GM12878 (cell line): ENCODE measurements at regions of chr22 and their contacts with region 1.

Region 1: GRCh38 chr22:40898850-40899357 is 37.0 kb upstream of the DNAJB7 start:
- DNase-seq: peak; percentile 44
- ATAC-seq: peak; percentile 92
- H3K4me3 ChIP-seq: no peak overlapping the region
- H3K27ac ChIP-seq: no peak overlapping the region
- H3K4me1 ChIP-seq: no peaks in the 10 kb centered on the region
- H3K27me3 ChIP-seq: no peaks in the 10 kb centered on the region
- CTCF ChIP-seq: peak; percentile 48 to 68 (median 54); a peak in 5 of 6 replicates
- EP300 ChIP-seq: no peak
- POLR2A ChIP-seq: no peak
- RAD21 ChIP-seq: peak; percentile 77

Region 2: GRCh38 chr22:40679964-40680818 is 218.7 kb before region 1 on chr22:
- CTCF ChIA-PET with region 1: interaction called, 49 read pairs
- POLR2A ChIA-PET with region 1: interaction called, 6 read pairs
- RAD21 ChIA-PET with region 1: interaction called, 45 read pairs
- SMC1A ChIA-PET with region 1: interaction called, 33 read pairs
- in situ Hi-C with region 1: loop called (anchors 10 kb)
- intact Hi-C with region 1: loop called (anchors 2 kb)
- DNase-seq: no peak
- ATAC-seq: no peak
- H3K4me3 ChIP-seq: no peak overlapping the region
- H3K27ac ChIP-seq: no peak overlapping the region
- H3K4me1 ChIP-seq: no peaks in the 10 kb centered on the region
- H3K27me3 ChIP-seq: peaks cover 0 to 3% of the 10 kb centered on the region in 2 experiments; a peak in 3 of 4 replicates
- CTCF ChIP-seq: no peak
- EP300 ChIP-seq: no peak
- POLR2A ChIP-seq: no peak
- RAD21 ChIP-seq: no peak

Region 3: DNA sequence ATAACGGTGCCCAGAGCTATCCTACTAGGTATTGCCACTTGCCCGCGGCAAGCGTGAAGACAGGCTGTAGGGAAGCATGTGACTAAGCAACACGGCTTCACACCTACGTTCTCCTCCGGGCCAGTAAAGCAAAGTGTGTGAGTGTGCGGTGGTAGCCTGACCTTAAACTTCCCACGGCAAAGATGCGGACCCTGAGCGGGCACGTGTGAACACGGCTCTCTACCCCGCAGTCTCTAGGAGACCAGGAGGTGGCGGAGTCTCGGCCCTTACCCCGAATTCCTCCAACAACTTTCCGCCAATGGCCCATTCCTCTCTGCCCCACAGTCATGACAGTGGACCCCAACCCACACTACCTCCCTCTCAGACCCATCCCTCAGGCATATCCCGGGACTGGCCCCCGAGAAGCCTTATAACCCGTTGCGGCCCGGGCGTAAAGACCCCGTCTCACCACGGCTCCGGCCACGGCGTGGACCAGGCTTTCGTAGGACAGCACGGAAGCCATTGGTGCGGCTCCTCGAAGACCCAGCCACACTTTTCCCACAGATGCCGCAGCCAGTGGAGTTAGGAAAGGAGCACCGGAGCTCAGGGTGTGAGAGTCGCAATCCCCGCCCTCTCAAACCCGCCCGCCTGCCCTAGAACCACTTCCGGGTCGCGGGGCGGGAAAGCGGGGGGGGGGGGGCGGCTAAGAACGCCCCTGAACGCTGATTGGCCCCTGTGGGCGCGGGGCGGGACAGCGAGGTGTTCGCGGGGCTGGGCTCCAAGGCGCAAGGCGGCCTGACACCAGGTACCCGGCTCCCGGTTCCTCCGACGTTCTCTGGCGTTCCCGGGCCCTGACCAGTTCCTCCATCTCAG is 79.9 kb before region 1 on chr22 and contains the start of gene SLC25A17:
- CTCF ChIA-PET with region 1: interaction called, 7 read pairs
- POLR2A ChIA-PET with region 1: interaction called, 4 read pairs
- RAD21 ChIA-PET with region 1: interaction called, 14 read pairs
- SMC1A ChIA-PET with region 1: interaction called, 11 read pairs
- in situ Hi-C with region 1: no loop called
- intact Hi-C with region 1: no loop called
- DNase-seq: peak; percentile 39
- ATAC-seq: peak; percentile 93
- H3K4me3 ChIP-seq: peak within 1 kb of the TSS; percentile 89
- H3K27ac ChIP-seq: peak within 1 kb of the TSS; percentile 84
- H3K4me1 ChIP-seq: no peaks in the 10 kb centered on the region
- H3K27me3 ChIP-seq: no peaks in the 10 kb centered on the region
- CTCF ChIP-seq: peak; percentile 30 to 41 (median 34); a peak in 3 of 6 replicates
- EP300 ChIP-seq: no peak
- POLR2A ChIP-seq: peak; percentile 70
- RAD21 ChIP-seq: no peak
- polyA plus RNA-seq, gene SLC25A17: 77.7 to 113 TPM

Region 4: GRCh38 chr22:40867109-40867508 is 31.8 kb before region 1 on chr22:
- CTCF ChIA-PET with region 1: interaction called, 13 read pairs
- POLR2A ChIA-PET with region 1: no interaction called
- RAD21 ChIA-PET with region 1: no interaction called
- SMC1A ChIA-PET with region 1: interaction called, 5 read pairs
- in situ Hi-C with region 1: no loop called
- intact Hi-C with region 1: no loop called
- DNase-seq: no peak
- ATAC-seq: no peak
- H3K4me3 ChIP-seq: no peak overlapping the region
- H3K27ac ChIP-seq: no peak overlapping the region
- H3K4me1 ChIP-seq: peaks cover 6% of the 10 kb centered on the region; the same call in 1 of the 2 replicates
- H3K27me3 ChIP-seq: no peaks in the 10 kb centered on the region
- CTCF ChIP-seq: no peak
- EP300 ChIP-seq: no peak
- POLR2A ChIP-seq: no peak
- RAD21 ChIP-seq: no peak

Region 5: DNA sequence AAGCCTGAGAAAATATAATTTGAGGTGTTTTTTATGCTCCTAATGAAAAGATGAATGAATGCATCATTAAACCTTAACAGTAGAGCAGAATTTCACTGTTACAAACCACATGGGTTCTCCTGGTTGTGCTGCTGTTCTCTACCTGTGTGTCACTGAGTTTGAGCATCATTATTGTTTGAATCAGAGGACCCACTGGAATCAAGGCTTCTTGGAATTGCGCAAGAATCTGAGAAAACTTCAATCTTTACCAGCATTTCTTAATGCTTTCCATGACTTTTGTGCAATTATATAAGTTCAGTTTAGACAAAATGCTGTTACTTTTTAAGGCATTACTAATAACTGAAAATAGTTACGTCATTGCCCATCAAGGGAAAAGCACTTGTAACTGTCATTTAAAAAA is 33.5 kb after region 1 on chr22:
- CTCF ChIA-PET with region 1: no interaction called
- POLR2A ChIA-PET with region 1: no interaction called
- RAD21 ChIA-PET with region 1: no interaction called
- SMC1A ChIA-PET with region 1: no interaction called
- in situ Hi-C with region 1: no loop called
- intact Hi-C with region 1: no loop called
- DNase-seq: no peak
- ATAC-seq: no peak
- H3K4me3 ChIP-seq: no peak overlapping the region
- H3K27ac ChIP-seq: no peak overlapping the region
- H3K4me1 ChIP-seq: no peaks in the 10 kb centered on the region
- H3K27me3 ChIP-seq: no peaks in the 10 kb centered on the region
- CTCF ChIP-seq: no peak
- EP300 ChIP-seq: no peak
- POLR2A ChIP-seq: no peak
- RAD21 ChIP-seq: no peak

Region 6: GRCh38 chr22:41022470-41023298 is 123.8 kb after region 1 on chr22:
- CTCF ChIA-PET with region 1: no interaction called
- POLR2A ChIA-PET with region 1: no interaction called
- RAD21 ChIA-PET with region 1: no interaction called
- SMC1A ChIA-PET with region 1: no interaction called
- in situ Hi-C with region 1: no loop called
- intact Hi-C with region 1: no loop called
- DNase-seq: peak; percentile 24
- ATAC-seq: peak; percentile 86
- H3K4me3 ChIP-seq: peak overlapping the region; percentile 75
- H3K27ac ChIP-seq: 0 out of 2 replicates have a peak overlapping the region, but pooled peaks have one; percentile 29
- H3K4me1 ChIP-seq: peaks cover 7% of the 10 kb centered on the region
- H3K27me3 ChIP-seq: no peaks in the 10 kb centered on the region; a peak in 1 of 4 replicates
- CTCF ChIP-seq: no peak
- EP300 ChIP-seq: 0 out of 4 replicates have a peak, but pooled peaks of 1 of the 2 experiments have one; percentile 16
- POLR2A ChIP-seq: peak; percentile 69; the same call in 1 of the 2 replicates
- RAD21 ChIP-seq: no peak